Right ventricle myocardium superior (tissue), 1 donor: ENCODE measurements at regions of chr15 and their contacts with region 1.

Region 1: GRCh38 chr15:90529371-90530249 is at the start of gene CRTC3:
- DNase-seq: peak; percentile 74
- ATAC-seq: peak; percentile 92
- total RNA-seq, gene CRTC3: 27.2 TPM

Region 2: DNA sequence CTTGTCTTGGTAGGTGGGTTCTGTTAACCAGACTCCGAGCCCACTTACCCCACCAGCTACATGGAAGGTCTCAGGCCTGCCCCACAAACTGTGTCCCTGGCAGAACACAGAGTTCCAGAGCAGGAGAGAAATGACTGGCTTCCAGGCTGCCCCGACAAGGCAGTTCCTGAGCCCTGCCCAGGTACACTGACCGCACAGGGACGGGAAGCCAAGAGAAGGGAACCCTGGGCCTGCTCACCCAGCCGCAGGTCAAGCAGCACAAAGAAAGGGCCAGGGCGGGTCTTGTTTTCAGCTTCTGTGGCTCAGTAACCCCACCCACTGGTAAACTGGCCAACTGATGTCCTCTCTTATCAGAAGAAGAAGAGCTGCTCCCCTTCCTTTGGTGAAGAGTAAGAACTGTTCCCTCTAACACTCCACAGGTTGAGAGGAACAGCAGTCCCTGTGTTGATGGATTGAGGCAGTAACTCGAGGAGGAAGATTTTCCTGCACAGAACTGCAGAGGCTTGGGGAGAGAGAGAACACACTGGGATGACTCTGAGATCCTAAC is 68.5 kb after region 1 on chr15:
- intact Hi-C with region 1: loop called (anchors 10 kb)
- DNase-seq: peak; percentile 67
- ATAC-seq: peak; percentile 51